ENCODE measurements at regions of chr17 and their contacts with region 1.

Region 1: DNA sequence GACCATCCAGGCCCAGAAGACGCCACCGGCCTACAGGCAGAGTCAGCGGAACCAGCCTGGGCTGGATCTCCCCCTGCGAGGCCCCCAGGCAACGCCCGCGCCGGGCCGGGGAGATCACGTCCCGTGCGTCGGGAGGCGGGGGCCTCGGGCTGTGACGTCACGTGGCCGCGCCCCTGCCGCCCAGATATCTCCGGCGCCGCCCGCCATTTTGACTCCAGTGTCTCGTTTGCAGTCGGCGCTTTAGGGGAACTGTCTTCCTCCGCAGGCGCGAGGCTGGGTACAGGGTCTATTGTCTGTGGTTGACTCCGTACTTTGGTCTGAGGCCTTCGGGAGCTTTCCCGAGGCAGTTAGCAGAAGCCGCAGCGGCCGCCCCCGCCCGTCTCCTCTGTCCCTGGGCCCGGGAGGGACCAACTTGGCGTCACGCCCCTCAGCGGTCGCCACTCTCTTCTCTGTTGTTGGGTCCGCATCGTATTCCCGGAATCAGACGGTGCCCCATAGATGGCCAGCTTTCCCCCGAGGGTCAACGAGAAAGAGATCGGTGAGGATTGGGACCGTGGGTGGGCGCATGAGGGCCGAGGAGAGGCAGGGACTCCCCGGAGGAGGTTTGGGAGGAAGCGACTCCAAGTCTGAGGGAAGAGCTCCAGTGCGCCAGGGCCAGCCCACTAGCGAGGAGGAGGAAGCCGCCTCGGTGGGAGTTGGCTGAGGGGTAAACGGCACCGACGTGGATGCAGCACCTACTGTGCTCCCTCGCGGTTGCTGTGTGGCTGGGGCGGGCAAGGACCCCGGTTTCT is at the start of gene WSB1:
- DNase-seq: peak; percentile 56
- ATAC-seq: peak; percentile 87
- H3K4me3 ChIP-seq: peak within 1 kb of the TSS; percentile 87 to 99
- H3K27ac ChIP-seq: peak within 1 kb of the TSS; percentile 91
- H3K4me1 ChIP-seq: peaks cover 22 to 23% of the 10 kb centered on the region in 2 experiments
- H3K27me3 ChIP-seq: no peaks in the 10 kb centered on the region
- CTCF ChIP-seq: no peak
- POLR2A ChIP-seq: peak; percentile 97
- RAD21 ChIP-seq: no peak
- total RNA-seq, gene WSB1: 88.0 TPM

Region 2: DNA sequence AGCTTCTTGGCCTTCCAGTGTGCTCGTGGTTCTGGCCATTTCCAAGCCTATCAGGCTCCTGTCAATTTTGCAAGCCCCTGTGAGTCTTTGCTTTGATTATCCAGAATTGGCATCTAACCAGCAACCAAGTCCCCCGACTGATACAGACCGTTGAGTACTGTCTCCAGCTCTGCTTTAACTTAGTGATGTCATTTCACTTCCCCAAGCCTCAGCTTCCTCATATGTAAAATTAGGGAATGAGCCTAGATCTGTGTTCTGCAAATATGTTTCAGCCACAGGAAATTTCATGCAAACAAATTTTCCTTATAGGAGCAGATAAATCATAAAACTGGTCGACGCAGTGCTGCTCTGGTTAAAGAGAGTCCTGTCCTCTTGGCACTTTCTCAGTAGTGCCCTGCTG is 60.3 kb before region 1 on chr17:
- CTCF ChIA-PET with region 1: no interaction called
- POLR2A ChIA-PET with region 1: no interaction called
- RAD21 ChIA-PET with region 1: no interaction called
- intact Hi-C with region 1: no loop called
- DNase-seq: no peak
- ATAC-seq: no peak
- H3K4me3 ChIP-seq: no peak overlapping the region
- H3K27ac ChIP-seq: no peak overlapping the region
- H3K4me1 ChIP-seq: no peaks in the 10 kb centered on the region
- H3K27me3 ChIP-seq: no peaks in the 10 kb centered on the region
- CTCF ChIP-seq: no peak
- POLR2A ChIP-seq: no peak
- RAD21 ChIP-seq: no peak

Region 3: GRCh38 chr17:27245230-27245696 is 48.8 kb before region 1 on chr17:
- CTCF ChIA-PET with region 1: interaction called, 3 read pairs
- POLR2A ChIA-PET with region 1: interaction called, 8 read pairs
- RAD21 ChIA-PET with region 1: no interaction called
- intact Hi-C with region 1: loop called (anchors 5 kb)
- DNase-seq: peak; percentile 69
- ATAC-seq: peak; percentile 99
- H3K4me3 ChIP-seq: 0 out of 4 replicates have a peak overlapping the region, but pooled peaks of 1 of the 2 experiments have one; percentile 1
- H3K27ac ChIP-seq: no peak overlapping the region
- H3K4me1 ChIP-seq: peaks cover 22 to 39% of the 10 kb centered on the region in 2 experiments
- H3K27me3 ChIP-seq: no peaks in the 10 kb centered on the region
- CTCF ChIP-seq: peak; percentile 60 to 92 (median 73)
- POLR2A ChIP-seq: no peak
- RAD21 ChIP-seq: peak; percentile 98

Region 4: GRCh38 chr17:27306276-27306835 is 12.3 kb after region 1 on chr17:
- CTCF ChIA-PET with region 1: no interaction called
- POLR2A ChIA-PET with region 1: interaction called, 12 read pairs
- RAD21 ChIA-PET with region 1: no interaction called
- intact Hi-C with region 1: loop called (anchors 1 kb)
- DNase-seq: no peak
- ATAC-seq: no peak
- H3K4me3 ChIP-seq: no peak overlapping the region
- H3K27ac ChIP-seq: no peak overlapping the region
- H3K4me1 ChIP-seq: no peaks in the 10 kb centered on the region
- H3K27me3 ChIP-seq: no peaks in the 10 kb centered on the region
- CTCF ChIP-seq: no peak
- POLR2A ChIP-seq: no peak
- RAD21 ChIP-seq: no peak

Region 5: GRCh38 chr17:27323524-27324206 is 29.6 kb after region 1 on chr17:
- CTCF ChIA-PET with region 1: no interaction called
- POLR2A ChIA-PET with region 1: interaction called, 10 read pairs
- RAD21 ChIA-PET with region 1: no interaction called
- intact Hi-C with region 1: no loop called
- DNase-seq: no peak
- ATAC-seq: peak; percentile 81
- H3K4me3 ChIP-seq: no peak overlapping the region
- H3K27ac ChIP-seq: no peak overlapping the region
- H3K4me1 ChIP-seq: peaks cover 9 to 17% of the 10 kb centered on the region in 2 experiments; a peak in 3 of 4 replicates
- H3K27me3 ChIP-seq: no peaks in the 10 kb centered on the region
- CTCF ChIP-seq: no peak
- POLR2A ChIP-seq: no peak
- RAD21 ChIP-seq: no peak

Region 6: GRCh38 chr17:27332485-27333409 is 38.7 kb after region 1 on chr17:
- CTCF ChIA-PET with region 1: interaction called, 6 read pairs
- POLR2A ChIA-PET with region 1: interaction called, 8 read pairs
- RAD21 ChIA-PET with region 1: interaction called in 1 of 2 experiments, 4 read pairs
- intact Hi-C with region 1: loop called (anchors 1 kb)
- DNase-seq: peak; percentile 97
- ATAC-seq: peak; percentile 90
- H3K4me3 ChIP-seq: peak overlapping the region; percentile 43 to 57
- H3K27ac ChIP-seq: peak overlapping the region; percentile 92
- H3K4me1 ChIP-seq: peaks cover 31 to 35% of the 10 kb centered on the region in 2 experiments
- H3K27me3 ChIP-seq: no peaks in the 10 kb centered on the region
- CTCF ChIP-seq: peak; percentile 70 to 85 (median 73)
- POLR2A ChIP-seq: peak; percentile 2
- RAD21 ChIP-seq: peak; percentile 95

Region 7: DNA sequence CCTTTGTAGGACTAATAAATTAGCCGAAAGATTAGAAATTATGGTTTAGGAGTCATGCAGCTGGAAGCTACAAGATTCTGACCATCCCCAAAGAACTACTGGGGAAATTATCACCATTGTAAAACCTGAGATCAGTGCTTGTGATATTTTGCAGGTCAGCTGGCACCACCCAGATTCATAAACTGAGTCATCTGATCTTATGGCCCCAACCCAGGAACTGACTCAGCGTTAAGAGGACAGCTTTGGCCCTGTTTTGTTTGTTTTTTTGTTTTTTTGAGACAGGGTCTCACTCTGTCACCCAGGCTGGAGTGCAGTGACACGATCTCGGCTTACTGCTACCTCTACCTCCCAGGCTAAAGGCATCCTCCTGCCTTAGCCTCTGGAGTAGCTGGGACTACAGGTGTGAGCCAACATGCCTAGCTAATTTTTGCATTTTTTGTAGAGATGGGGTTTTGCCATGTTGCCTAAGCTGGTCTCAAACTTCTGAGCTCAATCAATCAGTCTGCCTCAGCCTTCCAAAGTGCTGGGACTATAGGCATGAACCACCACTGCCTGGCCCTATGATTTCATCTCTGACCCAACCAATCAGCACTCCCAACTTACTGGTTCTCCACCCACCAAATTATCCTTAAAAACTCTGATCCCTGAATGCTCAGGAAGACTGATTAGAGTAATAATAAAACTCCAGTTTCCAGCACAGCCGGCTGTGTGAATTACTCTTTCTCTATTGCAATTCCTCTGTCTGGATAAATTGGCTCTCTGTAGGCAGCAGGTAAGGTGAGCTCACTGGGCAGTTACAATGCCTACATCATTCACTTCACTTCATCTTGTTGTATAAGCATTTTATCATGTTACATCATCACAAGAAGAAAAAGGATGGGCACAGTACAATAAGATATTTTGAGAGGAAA is 82.8 kb after region 1 on chr17:
- CTCF ChIA-PET with region 1: no interaction called
- POLR2A ChIA-PET with region 1: no interaction called
- RAD21 ChIA-PET with region 1: no interaction called
- intact Hi-C with region 1: no loop called
- DNase-seq: peak; percentile 23
- ATAC-seq: no peak
- H3K4me3 ChIP-seq: 0 out of 4 replicates have a peak overlapping the region, but pooled peaks of 1 of the 2 experiments have one; percentile 14
- H3K27ac ChIP-seq: no peak overlapping the region
- H3K4me1 ChIP-seq: peaks cover 11 to 29% of the 10 kb centered on the region in 2 experiments; a peak in 3 of 4 replicates
- H3K27me3 ChIP-seq: no peaks in the 10 kb centered on the region
- CTCF ChIP-seq: no peak
- POLR2A ChIP-seq: no peak
- RAD21 ChIP-seq: no peak